Caco-2 (cell line): ENCODE measurements at regions of chr3 and their contacts with region 1.

Region 1: GRCh38 chr3:50611464-50612233 is at the start of gene CISH:
- DNase-seq: peak; percentile 96 to 97
- H3K4me3 ChIP-seq: peak within 1 kb of the TSS; percentile 74
- H3K4me3 Mint-ChIP-seq: peak within 1 kb of the TSS; percentile 83
- H3K27ac Mint-ChIP-seq: peak within 1 kb of the TSS; percentile 81
- H3K4me1 ChIP-seq: peaks cover 11% of the 10 kb centered on the region
- H3K4me1 Mint-ChIP-seq: peaks cover 23% of the 10 kb centered on the region
- H3K27me3 ChIP-seq: no peaks in the 10 kb centered on the region
- H3K27me3 Mint-ChIP-seq: peaks cover 4% of the 10 kb centered on the region
- CTCF ChIP-seq: peak; percentile 27 to 55
- total RNA-seq, gene CISH: 2.9 and 3.4 TPM in 2 replicates

Region 2: DNA sequence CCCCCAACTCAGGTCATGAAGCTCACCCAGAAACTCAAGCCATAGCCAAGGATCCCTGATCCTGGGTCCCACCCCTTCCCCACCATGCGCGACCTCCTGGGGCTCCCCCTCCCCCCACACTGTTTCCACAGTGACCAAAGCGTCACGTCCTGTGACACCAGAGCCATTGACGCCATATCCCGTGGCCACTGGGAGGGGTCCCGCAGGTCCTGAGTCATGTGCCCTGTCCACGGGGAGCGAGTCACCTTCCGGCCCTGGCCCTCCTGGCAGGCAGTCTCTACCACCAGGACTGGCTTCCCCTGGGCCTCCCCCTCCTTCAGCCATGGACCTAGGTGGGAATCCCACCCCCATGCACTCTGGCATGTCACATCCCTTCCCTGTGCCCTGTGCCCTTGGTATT is 441.0 kb before region 1 on chr3:
- CTCF ChIA-PET with region 1: no interaction called
- POLR2A ChIA-PET with region 1: no interaction called
- intact Hi-C with region 1: no loop called
- DNase-seq: no peak
- H3K4me3 ChIP-seq: no peak overlapping the region
- H3K4me3 Mint-ChIP-seq: no peak overlapping the region
- H3K27ac Mint-ChIP-seq: no peak overlapping the region
- H3K4me1 ChIP-seq: peaks cover 15% of the 10 kb centered on the region
- H3K4me1 Mint-ChIP-seq: peaks cover 16% of the 10 kb centered on the region
- H3K27me3 ChIP-seq: no peaks in the 10 kb centered on the region
- H3K27me3 Mint-ChIP-seq: no peaks in the 10 kb centered on the region
- CTCF ChIP-seq: no peak

Region 3: GRCh38 chr3:50350527-50351322 is 260.9 kb before region 1 on chr3 and contains the starts of genes CYB561D2 and NPRL2:
- CTCF ChIA-PET with region 1: interaction called, 3 read pairs
- POLR2A ChIA-PET with region 1: no interaction called
- intact Hi-C with region 1: loop called (anchors 5 kb)
- DNase-seq: peak; percentile 96
- H3K4me3 ChIP-seq: peak within 1 kb of the TSS; percentile 91
- H3K4me3 Mint-ChIP-seq: peak within 1 kb of the TSS; percentile 76
- H3K27ac Mint-ChIP-seq: peak within 1 kb of the TSS; percentile 81
- H3K4me1 ChIP-seq: peaks cover 3% of the 10 kb centered on the region; the same call in 1 of the 2 replicates
- H3K4me1 Mint-ChIP-seq: peaks cover 12% of the 10 kb centered on the region
- H3K27me3 ChIP-seq: no peaks in the 10 kb centered on the region
- H3K27me3 Mint-ChIP-seq: no peaks in the 10 kb centered on the region
- CTCF ChIP-seq: no peak
- total RNA-seq, gene CYB561D2: 21.2 and 21.4 TPM in 2 replicates
- total RNA-seq, gene NPRL2: 23.7 and 29.8 TPM in 2 replicates

Region 4: DNA sequence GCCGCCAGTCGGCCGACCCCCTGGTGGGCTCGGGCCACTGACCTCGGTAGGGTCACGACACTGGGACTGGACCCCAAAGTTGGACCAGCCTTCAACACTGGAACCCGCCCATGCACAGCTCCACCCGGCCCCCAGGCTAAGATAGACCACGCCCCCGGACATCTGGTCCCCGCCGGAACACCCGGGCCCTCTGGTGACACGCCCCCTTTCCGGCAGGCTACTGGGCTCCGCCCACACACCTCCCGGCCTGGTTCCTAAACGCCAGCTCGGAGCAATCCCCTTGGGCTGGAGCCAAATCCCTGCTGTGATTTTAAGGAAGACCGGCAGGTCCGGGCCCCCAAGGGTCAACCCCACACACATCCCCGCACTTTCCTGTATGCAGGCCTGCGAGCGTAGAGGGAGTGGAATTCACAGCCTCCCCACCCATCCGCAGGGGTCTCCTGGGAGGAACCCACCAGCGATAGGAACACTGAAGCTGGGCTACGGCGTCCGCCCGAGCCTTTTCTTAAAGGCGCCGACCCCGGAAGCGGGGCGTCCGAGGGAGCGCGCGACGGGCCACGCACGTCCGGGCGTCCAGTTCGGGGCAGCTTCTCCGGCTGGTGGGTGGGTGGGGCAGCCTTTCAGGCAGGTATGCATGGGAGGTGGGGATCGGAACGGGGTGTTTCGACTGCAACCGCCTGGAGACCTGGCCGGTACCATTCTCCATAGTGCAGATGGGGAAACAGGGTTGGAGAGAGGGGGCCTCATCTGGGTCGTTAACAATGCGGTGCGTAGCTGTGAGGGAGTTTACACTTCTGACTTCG is 42.5 kb before region 1 on chr3 and contains the start of gene HEMK1:
- CTCF ChIA-PET with region 1: interaction called, 27 read pairs
- POLR2A ChIA-PET with region 1: interaction called, 21 read pairs
- intact Hi-C with region 1: loop called (anchors 1 kb)
- DNase-seq: peak; percentile 96 to 97
- H3K4me3 ChIP-seq: peak within 1 kb of the TSS; percentile 92
- H3K4me3 Mint-ChIP-seq: peak within 1 kb of the TSS; percentile 94
- H3K27ac Mint-ChIP-seq: peak within 1 kb of the TSS; percentile 97
- H3K4me1 ChIP-seq: 0 out of 2 replicates have a peak, but pooled peaks cover 5% of the 10 kb centered on the region
- H3K4me1 Mint-ChIP-seq: no peaks in the 10 kb centered on the region
- H3K27me3 ChIP-seq: no peaks in the 10 kb centered on the region
- H3K27me3 Mint-ChIP-seq: peaks cover 3% of the 10 kb centered on the region
- CTCF ChIP-seq: no peak
- total RNA-seq, gene HEMK1: 12.6 and 14.3 TPM in 2 replicates

Region 5: GRCh38 chr3:50600841-50601591 is 10.6 kb before region 1 on chr3:
- CTCF ChIA-PET with region 1: interaction called, 19 read pairs
- POLR2A ChIA-PET with region 1: interaction called, 14 read pairs
- intact Hi-C with region 1: loop called (anchors 1 kb)
- DNase-seq: peak; percentile 87 to 93
- H3K4me3 ChIP-seq: no peak overlapping the region
- H3K4me3 Mint-ChIP-seq: peak overlapping the region; percentile 70
- H3K27ac Mint-ChIP-seq: peak overlapping the region; percentile 98
- H3K4me1 ChIP-seq: peaks cover 37% of the 10 kb centered on the region
- H3K4me1 Mint-ChIP-seq: peaks cover 20% of the 10 kb centered on the region
- H3K27me3 ChIP-seq: no peaks in the 10 kb centered on the region
- H3K27me3 Mint-ChIP-seq: no peaks in the 10 kb centered on the region
- CTCF ChIP-seq: no peak

Region 6: GRCh38 chr3:50714946-50715345 is 103.3 kb after region 1 on chr3:
- CTCF ChIA-PET with region 1: no interaction called
- POLR2A ChIA-PET with region 1: no interaction called
- intact Hi-C with region 1: no loop called
- DNase-seq: no peak
- H3K4me3 ChIP-seq: no peak overlapping the region
- H3K4me3 Mint-ChIP-seq: no peak overlapping the region
- H3K27ac Mint-ChIP-seq: no peak overlapping the region
- H3K4me1 ChIP-seq: no peaks in the 10 kb centered on the region
- H3K4me1 Mint-ChIP-seq: no peaks in the 10 kb centered on the region
- H3K27me3 ChIP-seq: no peaks in the 10 kb centered on the region
- H3K27me3 Mint-ChIP-seq: peaks cover 19% of the 10 kb centered on the region
- CTCF ChIP-seq: no peak

Region 7: GRCh38 chr3:50885070-50885850 is 273.6 kb after region 1 on chr3:
- CTCF ChIA-PET with region 1: interaction called, 6 read pairs
- POLR2A ChIA-PET with region 1: no interaction called
- intact Hi-C with region 1: loop called (anchors 1 kb)
- DNase-seq: peak in 1 of 2 experiments; percentile 13
- H3K4me3 ChIP-seq: no peak overlapping the region
- H3K4me3 Mint-ChIP-seq: no peak overlapping the region
- H3K27ac Mint-ChIP-seq: no peak overlapping the region
- H3K4me1 ChIP-seq: no peaks in the 10 kb centered on the region
- H3K4me1 Mint-ChIP-seq: no peaks in the 10 kb centered on the region
- H3K27me3 ChIP-seq: no peaks in the 10 kb centered on the region
- H3K27me3 Mint-ChIP-seq: peaks cover 6% of the 10 kb centered on the region
- CTCF ChIP-seq: peak; percentile 12 to 24

Region 8: GRCh38 chr3:51311055-51311454 is 699.4 kb after region 1 on chr3:
- CTCF ChIA-PET with region 1: interaction called, 14 read pairs
- POLR2A ChIA-PET with region 1: no interaction called
- intact Hi-C with region 1: no loop called
- DNase-seq: peak in 1 of 2 experiments; percentile 33
- H3K4me3 ChIP-seq: no peak overlapping the region
- H3K4me3 Mint-ChIP-seq: no peak overlapping the region
- H3K27ac Mint-ChIP-seq: no peak overlapping the region
- H3K4me1 ChIP-seq: no peaks in the 10 kb centered on the region
- H3K4me1 Mint-ChIP-seq: no peaks in the 10 kb centered on the region
- H3K27me3 ChIP-seq: no peaks in the 10 kb centered on the region; the same call in 1 of the 2 replicates
- H3K27me3 Mint-ChIP-seq: peaks cover 3% of the 10 kb centered on the region
- CTCF ChIP-seq: peak; percentile 43 to 63

Region 9: DNA sequence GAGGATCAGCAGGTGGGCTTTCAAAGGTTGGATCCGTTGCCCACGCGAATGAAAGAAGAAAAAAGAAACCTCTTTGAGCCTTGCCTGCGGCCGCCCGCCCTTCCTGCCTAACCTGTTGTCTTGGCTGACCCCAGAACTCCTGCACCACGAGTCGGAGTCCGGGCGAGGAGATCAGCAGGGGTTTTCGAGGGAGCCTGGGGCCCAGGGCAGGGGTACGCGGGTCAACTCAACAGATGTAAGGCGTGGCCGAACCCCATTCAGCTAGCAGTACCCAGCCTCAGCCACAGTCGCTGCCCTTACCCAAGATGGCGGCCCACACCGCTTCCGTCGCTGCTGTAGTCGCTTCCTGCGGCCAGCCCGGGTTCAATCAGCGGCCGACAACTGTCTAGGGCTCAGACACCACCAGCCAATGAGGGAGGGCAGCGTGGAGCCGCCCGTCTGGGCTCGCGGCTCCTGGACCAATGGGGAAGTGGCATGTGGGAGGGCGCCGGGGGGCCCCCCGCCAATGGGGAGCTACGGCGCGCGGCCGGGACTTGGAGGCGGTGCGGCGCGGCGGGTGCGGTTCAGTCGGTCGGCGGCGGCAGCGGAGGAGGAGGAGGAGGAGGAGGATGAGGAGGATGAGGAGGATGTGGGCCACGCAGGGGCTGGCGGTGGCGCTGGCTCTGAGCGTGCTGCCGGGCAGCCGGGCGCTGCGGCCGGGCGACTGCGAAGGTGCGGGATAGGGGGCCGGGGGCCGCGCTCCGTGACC is 773.3 kb after region 1 on chr3 and contains the start of gene MANF:
- CTCF ChIA-PET with region 1: interaction called, 12 read pairs
- POLR2A ChIA-PET with region 1: interaction called, 3 read pairs
- intact Hi-C with region 1: no loop called
- DNase-seq: peak; percentile 97
- H3K4me3 ChIP-seq: peak within 1 kb of the TSS; percentile 94
- H3K4me3 Mint-ChIP-seq: peak within 1 kb of the TSS; percentile 96
- H3K27ac Mint-ChIP-seq: peak within 1 kb of the TSS; percentile 93
- H3K4me1 ChIP-seq: peaks cover 43% of the 10 kb centered on the region
- H3K4me1 Mint-ChIP-seq: peaks cover 23% of the 10 kb centered on the region
- H3K27me3 ChIP-seq: no peaks in the 10 kb centered on the region
- H3K27me3 Mint-ChIP-seq: no peaks in the 10 kb centered on the region
- CTCF ChIP-seq: no peak
- total RNA-seq, gene MANF: 94.5 and 102 TPM in 2 replicates